Activated CD4-positive, alpha-beta T cell treated with anti-CD3 and anti-CD28 coated beads for 36 hours (primary cell): ENCODE measurements at regions of chr3 and their contacts with region 1.

Region 1: GRCh38 chr3:101849051-101849720 is at the start of gene NFKBIZ:
- DNase-seq: peak; percentile 96
- ATAC-seq: peak; percentile 70
- H3K4me3 Mint-ChIP-seq: peak within 1 kb of the TSS; percentile 98
- H3K27ac Mint-ChIP-seq: peak within 1 kb of the TSS; percentile 100
- H3K4me1 Mint-ChIP-seq: peaks cover 46% of the 10 kb centered on the region
- H3K27me3 Mint-ChIP-seq: no peaks in the 10 kb centered on the region
- total RNA-seq, gene NFKBIZ: 47.8 to 56.7 TPM

Region 2: GRCh38 chr3:101676765-101677435 is 172.3 kb before region 1 on chr3 and contains the start of gene ZBTB11:
- CTCF ChIA-PET with region 1: no interaction called
- POLR2A ChIA-PET with region 1: no interaction called
- intact Hi-C with region 1: loop called in 1 of 2 experiments (anchors 2 kb)
- DNase-seq: peak; percentile 100
- ATAC-seq: peak; percentile 78
- H3K4me3 Mint-ChIP-seq: peak within 1 kb of the TSS; percentile 94
- H3K27ac Mint-ChIP-seq: peak within 1 kb of the TSS; percentile 92
- H3K4me1 Mint-ChIP-seq: peaks cover 52% of the 10 kb centered on the region
- H3K27me3 Mint-ChIP-seq: no peaks in the 10 kb centered on the region
- total RNA-seq, gene ZBTB11: 25.1 to 26.0 TPM

Region 3: DNA sequence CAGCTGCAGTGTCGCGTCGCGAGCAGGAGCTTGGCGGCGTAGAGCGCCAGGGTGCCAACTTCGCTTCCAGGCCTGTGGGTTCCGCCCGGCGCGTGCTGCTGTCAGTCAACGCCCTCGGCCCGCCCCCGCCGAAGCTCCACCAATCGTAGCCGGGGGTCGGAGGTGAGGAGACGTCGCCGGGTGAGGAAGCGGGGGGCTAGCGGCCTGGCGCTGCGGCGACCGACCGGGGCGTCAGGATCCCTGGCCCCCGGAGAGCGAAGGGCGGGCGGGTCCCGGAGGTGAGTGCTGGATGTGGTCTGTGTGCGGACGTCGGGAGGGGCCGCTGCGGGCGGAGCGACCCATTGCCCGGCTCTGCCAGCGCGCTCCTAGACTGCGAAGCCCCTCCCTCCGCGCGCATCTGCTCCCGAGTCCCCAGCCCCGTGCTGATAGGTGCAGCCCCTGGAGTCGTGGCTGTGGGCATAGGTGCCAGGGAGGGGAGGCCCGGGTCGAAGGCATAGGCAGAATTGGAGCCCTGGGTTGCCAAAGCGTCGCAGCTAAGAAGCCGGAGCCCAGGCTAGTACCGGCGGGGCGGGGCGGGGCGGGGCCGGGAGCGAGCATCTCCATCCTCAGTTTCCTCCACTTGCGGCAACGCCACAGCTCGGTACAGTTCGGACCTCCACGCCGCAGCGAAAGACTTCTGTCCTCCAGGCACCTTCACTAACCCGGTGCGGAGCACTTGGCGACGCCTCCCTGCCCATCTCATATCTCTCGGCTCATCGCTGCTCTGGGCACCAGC is 70.0 kb before region 1 on chr3 and contains the start of gene NXPE3:
- CTCF ChIA-PET with region 1: no interaction called
- POLR2A ChIA-PET with region 1: interaction called, 6 read pairs
- intact Hi-C with region 1: loop called (anchors 1 kb)
- DNase-seq: peak; percentile 97
- ATAC-seq: peak; percentile 92
- H3K4me3 Mint-ChIP-seq: peak within 1 kb of the TSS; percentile 91
- H3K27ac Mint-ChIP-seq: peak within 1 kb of the TSS; percentile 96
- H3K4me1 Mint-ChIP-seq: peaks cover 49% of the 10 kb centered on the region
- H3K27me3 Mint-ChIP-seq: no peaks in the 10 kb centered on the region
- total RNA-seq, gene NXPE3: 12.8 to 18.5 TPM

Region 4: GRCh38 chr3:101861212-101861788 is 12.1 kb after region 1 on chr3:
- CTCF ChIA-PET with region 1: interaction called, 6 read pairs
- POLR2A ChIA-PET with region 1: interaction called, 4 read pairs
- intact Hi-C with region 1: loop called in 1 of 2 experiments (anchors 1 kb)
- DNase-seq: no peak
- ATAC-seq: peak; percentile 67
- H3K4me3 Mint-ChIP-seq: no peak overlapping the region
- H3K27ac Mint-ChIP-seq: peak overlapping the region; percentile 21
- H3K4me1 Mint-ChIP-seq: peaks cover 53% of the 10 kb centered on the region
- H3K27me3 Mint-ChIP-seq: no peaks in the 10 kb centered on the region

Region 5: DNA sequence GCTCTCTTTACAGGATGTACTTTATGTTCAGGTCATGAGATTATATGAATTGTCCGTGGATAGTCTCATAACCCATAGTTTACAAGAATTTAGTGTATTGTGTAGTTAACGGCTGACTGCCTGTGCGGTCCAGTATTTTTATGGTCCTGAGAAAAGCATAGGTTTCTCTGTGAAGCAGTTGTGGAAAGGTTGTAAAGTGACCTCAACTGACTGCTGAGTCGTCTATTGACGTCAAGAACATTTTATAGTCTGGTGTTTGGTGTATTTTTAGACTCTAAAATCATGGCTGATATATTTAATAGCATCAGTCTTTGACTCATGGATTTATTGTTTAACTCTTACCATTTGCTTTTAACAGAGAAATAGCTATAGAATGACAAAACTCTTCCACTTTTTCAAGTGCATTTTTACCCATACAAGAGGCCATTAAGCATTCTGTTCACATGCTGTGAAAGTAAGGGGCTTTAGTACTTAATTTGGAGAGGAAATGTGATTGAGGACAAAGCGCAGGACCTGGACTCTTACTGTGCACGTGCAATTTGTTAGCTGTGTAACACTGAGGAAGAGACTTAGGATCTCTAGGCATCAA is 240.8 kb after region 1 on chr3:
- CTCF ChIA-PET with region 1: interaction called, 4 read pairs
- POLR2A ChIA-PET with region 1: interaction called, 3 read pairs
- intact Hi-C with region 1: loop called (anchors 1 kb)
- DNase-seq: no peak
- ATAC-seq: no peak
- H3K4me3 Mint-ChIP-seq: no peak overlapping the region
- H3K27ac Mint-ChIP-seq: no peak overlapping the region
- H3K4me1 Mint-ChIP-seq: peaks cover 45% of the 10 kb centered on the region
- H3K27me3 Mint-ChIP-seq: peaks cover 5% of the 10 kb centered on the region

Region 6: DNA sequence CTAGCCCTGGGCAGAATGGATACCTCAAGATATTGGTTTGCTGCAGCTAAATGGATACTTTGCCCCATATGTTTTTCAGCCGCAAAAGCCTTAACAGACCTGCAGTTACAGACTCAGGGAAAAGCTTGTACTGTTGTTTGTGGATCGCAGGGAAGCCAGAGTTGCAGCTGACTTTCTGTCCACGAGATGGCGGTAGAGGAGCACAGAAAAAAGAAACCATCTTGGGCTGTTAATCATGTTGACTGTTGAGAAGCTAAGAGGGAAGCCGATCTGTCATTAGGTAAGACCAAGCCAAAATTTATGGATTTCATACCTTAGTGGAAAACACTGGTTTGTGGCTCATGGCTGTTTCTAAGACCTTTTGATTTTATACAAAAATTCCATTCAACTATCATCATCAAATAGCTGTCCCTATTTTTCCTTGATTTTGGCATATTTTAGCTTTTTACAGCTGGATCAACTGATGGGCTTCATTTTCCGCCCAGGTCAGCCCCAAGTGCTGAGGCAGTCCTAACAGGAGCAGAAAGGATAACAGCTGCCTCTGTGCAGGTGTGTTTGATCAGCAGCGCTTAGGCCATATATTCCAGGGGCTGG is 380.0 kb after region 1 on chr3:
- CTCF ChIA-PET with region 1: interaction called, 4 read pairs
- POLR2A ChIA-PET with region 1: no interaction called
- intact Hi-C with region 1: loop called in 1 of 2 experiments (anchors 2 kb)
- DNase-seq: peak; percentile 82
- ATAC-seq: peak; percentile 71
- H3K4me3 Mint-ChIP-seq: no peak overlapping the region
- H3K27ac Mint-ChIP-seq: no peak overlapping the region
- H3K4me1 Mint-ChIP-seq: peaks cover 14% of the 10 kb centered on the region
- H3K27me3 Mint-ChIP-seq: peaks cover 1% of the 10 kb centered on the region

Region 7: DNA sequence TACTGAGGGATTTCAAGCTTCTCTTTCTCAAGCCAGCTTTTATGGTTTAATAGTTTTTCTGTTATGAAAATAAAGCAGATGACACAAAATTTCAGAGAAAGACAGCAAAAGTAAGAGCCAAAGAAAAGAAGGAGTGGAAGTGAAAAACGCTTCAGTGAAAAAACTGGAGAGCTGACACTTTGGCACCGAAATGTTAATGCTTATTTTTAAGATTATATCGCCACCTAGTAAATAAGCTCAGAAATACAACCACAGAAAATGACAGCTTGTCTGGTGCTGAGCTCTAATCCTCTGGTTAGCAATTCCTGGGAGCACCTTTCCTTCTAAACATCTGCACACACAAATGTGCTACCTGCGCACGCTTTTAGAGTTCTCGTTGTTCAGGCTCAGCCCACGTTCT is 687.3 kb after region 1 on chr3:
- CTCF ChIA-PET with region 1: no interaction called
- POLR2A ChIA-PET with region 1: no interaction called
- intact Hi-C with region 1: no loop called
- DNase-seq: no peak
- ATAC-seq: no peak
- H3K4me3 Mint-ChIP-seq: no peak overlapping the region
- H3K27ac Mint-ChIP-seq: no peak overlapping the region
- H3K4me1 Mint-ChIP-seq: no peaks in the 10 kb centered on the region
- H3K27me3 Mint-ChIP-seq: peaks cover 6% of the 10 kb centered on the region

Region 8: DNA sequence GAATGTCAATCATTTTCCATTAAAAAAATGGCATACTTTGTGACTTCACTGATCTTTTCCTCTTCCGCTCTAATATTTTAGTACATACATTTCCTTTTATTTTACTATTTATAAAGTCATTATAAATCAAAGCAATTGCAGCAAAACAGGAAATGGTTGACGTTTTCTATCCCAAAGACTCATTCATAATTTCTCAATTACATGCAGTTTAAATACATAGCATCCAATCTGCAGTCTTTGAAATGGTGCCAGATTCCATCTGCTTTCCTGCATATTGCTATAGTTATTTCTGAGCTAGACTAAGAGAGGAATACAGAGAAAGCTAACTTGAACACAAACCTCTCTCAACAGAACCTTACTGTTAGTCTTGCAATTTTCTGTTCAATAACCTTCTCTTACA is 765.4 kb after region 1 on chr3:
- CTCF ChIA-PET with region 1: no interaction called
- POLR2A ChIA-PET with region 1: no interaction called
- intact Hi-C with region 1: no loop called
- DNase-seq: no peak
- ATAC-seq: no peak
- H3K4me3 Mint-ChIP-seq: no peak overlapping the region
- H3K27ac Mint-ChIP-seq: no peak overlapping the region
- H3K4me1 Mint-ChIP-seq: no peaks in the 10 kb centered on the region
- H3K27me3 Mint-ChIP-seq: no peaks in the 10 kb centered on the region